ENCODE measurements at regions of chr19 and their contacts with region 1.

Region 1: DNA sequence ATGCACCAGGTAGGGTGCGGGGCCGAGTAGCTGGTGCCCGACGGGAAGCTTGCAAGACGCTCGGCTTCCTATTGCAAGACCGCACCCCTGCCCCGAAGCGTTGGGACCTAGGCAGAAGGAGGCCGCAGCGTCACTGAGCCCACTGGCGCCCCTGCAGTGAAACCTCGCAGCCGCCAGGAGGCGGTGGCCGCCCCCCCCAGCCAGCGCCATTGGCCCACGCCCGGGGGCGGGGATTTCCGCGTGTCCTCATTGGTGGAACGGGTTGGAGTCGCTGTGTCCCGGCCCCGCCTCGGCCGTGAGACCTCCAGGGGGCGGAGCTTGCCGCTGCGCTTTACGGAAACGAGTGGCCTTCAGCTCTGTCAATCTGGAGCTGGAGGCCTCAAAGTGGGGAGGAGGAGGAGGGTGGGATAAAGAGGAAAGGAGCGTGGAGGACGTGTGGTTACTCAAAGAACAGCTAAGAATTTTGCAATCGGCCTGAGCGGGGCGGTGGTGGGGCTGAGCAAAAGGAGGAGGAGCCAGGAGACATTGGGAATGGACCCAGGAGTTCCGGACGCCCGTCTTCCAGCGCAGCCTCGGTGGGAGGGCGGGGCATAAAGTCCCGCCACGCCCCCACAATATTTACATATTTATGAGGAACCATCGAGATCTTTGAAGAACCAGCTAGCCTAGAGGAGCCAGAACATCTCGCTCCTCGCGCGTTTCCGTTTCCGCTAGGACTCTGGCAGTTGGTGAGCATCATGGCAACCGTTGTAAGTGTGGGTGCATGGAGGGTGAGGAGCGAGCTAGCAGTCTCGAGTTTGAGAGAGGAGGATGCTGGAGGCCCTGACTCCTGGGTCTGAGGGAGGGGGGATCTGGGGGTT is at the starts of genes GYS1 and RUVBL2:
- DNase-seq: peak; percentile 99
- ATAC-seq: peak; percentile 91
- H3K4me3 ChIP-seq: peak within 1 kb of the TSS; percentile 75 to 77
- H3K27ac ChIP-seq: peak within 1 kb of the TSS; percentile 75
- H3K4me1 ChIP-seq: peaks cover 15 to 34% of the 10 kb centered on the region in 2 experiments
- H3K27me3 ChIP-seq: no peaks in the 10 kb centered on the region
- CTCF ChIP-seq: peak; percentile 73 to 85 (median 85)
- POLR2A ChIP-seq: peak; percentile 84
- RAD21 ChIP-seq: no peak; the same call in none of the 2 replicates
- total RNA-seq, gene GYS1: 50.7 TPM
- total RNA-seq, gene RUVBL2: 270 TPM

Region 2: DNA sequence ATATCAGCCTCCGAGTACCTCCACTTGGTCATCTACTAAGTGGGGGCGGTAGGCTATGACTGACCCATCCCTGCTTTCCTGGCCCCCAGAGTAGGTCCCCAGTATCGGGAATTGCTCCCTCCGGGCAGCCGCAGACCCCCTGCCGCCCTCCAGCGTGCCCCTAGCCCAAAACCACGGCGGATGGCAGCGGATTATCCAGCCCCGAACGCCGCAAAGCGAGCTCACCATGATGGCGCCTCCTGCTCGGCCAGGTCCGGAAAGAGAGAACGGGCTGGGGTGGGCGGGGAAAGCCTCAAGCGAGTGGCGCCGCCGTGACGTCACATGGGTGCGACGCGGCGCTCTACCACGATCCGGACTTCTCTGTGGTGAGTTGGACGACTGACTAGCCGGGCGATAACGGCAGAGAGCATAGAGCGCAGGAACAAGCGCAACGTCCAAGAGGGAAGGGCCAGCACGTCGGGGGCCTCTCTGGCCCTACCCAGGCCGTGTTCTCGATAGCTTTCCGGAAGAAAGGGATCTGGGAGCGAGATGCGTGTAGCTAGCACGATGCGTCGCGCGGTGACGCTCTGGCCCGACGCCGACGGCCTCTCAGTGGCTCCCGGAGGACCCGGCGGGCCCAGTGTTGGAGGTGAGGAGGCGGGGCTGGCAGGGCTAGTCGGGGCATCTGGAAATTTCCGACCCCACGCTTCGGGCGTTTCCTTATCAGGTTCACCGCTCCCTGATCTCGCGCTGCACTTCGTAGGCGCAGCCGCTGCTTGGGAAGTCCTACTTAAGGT is 374.3 kb before region 1 on chr19 and contains the starts of genes RPL18 and SPHK2:
- CTCF ChIA-PET with region 1: no interaction called
- POLR2A ChIA-PET with region 1: interaction called, 11 read pairs
- RAD21 ChIA-PET with region 1: no interaction called
- intact Hi-C with region 1: no loop called
- DNase-seq: peak; percentile 99
- ATAC-seq: peak; percentile 78
- H3K4me3 ChIP-seq: peak within 1 kb of the TSS; percentile 56 to 93
- H3K27ac ChIP-seq: peak within 1 kb of the TSS; percentile 86
- H3K4me1 ChIP-seq: peaks cover 38 to 56% of the 10 kb centered on the region in 2 experiments
- H3K27me3 ChIP-seq: no peaks in the 10 kb centered on the region
- CTCF ChIP-seq: no peak
- POLR2A ChIP-seq: peak; percentile 86
- RAD21 ChIP-seq: no peak
- total RNA-seq, gene RPL18: 2,006 TPM
- total RNA-seq, gene SPHK2: 19.9 TPM

Region 3: DNA sequence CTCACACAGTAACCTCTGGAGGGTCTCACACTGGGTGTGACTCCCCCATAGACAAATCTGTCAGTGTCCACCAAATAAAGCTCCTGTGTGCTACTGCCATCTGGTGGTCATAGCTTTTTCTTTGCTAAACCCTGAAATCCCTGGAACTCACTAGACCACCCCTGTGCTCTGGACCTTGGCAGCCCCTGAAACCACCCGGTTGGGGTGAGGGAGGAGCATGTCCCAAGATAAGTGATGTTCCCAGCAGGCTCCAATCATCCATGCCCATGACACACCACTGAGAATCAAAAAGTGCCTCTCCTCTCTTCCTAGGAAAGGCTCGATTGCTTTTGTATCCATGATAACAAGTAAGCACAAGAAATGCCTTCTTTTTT is 150.6 kb before region 1 on chr19:
- CTCF ChIA-PET with region 1: interaction called, 11 read pairs
- POLR2A ChIA-PET with region 1: no interaction called
- RAD21 ChIA-PET with region 1: no interaction called
- intact Hi-C with region 1: no loop called
- DNase-seq: peak; percentile 46
- ATAC-seq: peak; percentile 79
- H3K4me3 ChIP-seq: no peak overlapping the region
- H3K27ac ChIP-seq: no peak overlapping the region
- H3K4me1 ChIP-seq: peaks cover 0 to 5% of the 10 kb centered on the region in 2 experiments; a peak in 1 of 4 replicates
- H3K27me3 ChIP-seq: no peaks in the 10 kb centered on the region
- CTCF ChIP-seq: peak; percentile 60 to 90 (median 75)
- POLR2A ChIP-seq: no peak
- RAD21 ChIP-seq: peak; percentile 73

Region 4: GRCh38 chr19:48975947-48976847 is 17.2 kb before region 1 on chr19:
- CTCF ChIA-PET with region 1: interaction called, 28 read pairs
- POLR2A ChIA-PET with region 1: interaction called, 6 read pairs
- RAD21 ChIA-PET with region 1: no interaction called
- intact Hi-C with region 1: no loop called
- DNase-seq: no peak
- ATAC-seq: peak; percentile 80
- H3K4me3 ChIP-seq: no peak overlapping the region
- H3K27ac ChIP-seq: no peak overlapping the region
- H3K4me1 ChIP-seq: peaks cover 5 to 14% of the 10 kb centered on the region in 2 experiments; a peak in 3 of 4 replicates
- H3K27me3 ChIP-seq: no peaks in the 10 kb centered on the region
- CTCF ChIP-seq: 0 out of 6 replicates have a peak, but pooled peaks of 1 of the 3 experiments have one; percentile 10
- POLR2A ChIP-seq: no peak
- RAD21 ChIP-seq: no peak

Region 5: GRCh38 chr19:49017666-49018351 is 24.4 kb after region 1 on chr19:
- CTCF ChIA-PET with region 1: interaction called, 44 read pairs
- POLR2A ChIA-PET with region 1: interaction called, 11 read pairs
- RAD21 ChIA-PET with region 1: interaction called in 1 of 2 experiments, 4 read pairs
- intact Hi-C with region 1: no loop called
- DNase-seq: peak; percentile 60
- ATAC-seq: peak; percentile 73
- H3K4me3 ChIP-seq: peak overlapping the region; percentile 53 to 60
- H3K27ac ChIP-seq: peak overlapping the region; percentile 95
- H3K4me1 ChIP-seq: peaks cover 31 to 55% of the 10 kb centered on the region in 2 experiments
- H3K27me3 ChIP-seq: no peaks in the 10 kb centered on the region
- CTCF ChIP-seq: peak in 2 of 3 experiments; percentile 47 to 53; a peak in 4 of 6 replicates
- POLR2A ChIP-seq: peak; percentile 36
- RAD21 ChIP-seq: no peak

Region 6: DNA sequence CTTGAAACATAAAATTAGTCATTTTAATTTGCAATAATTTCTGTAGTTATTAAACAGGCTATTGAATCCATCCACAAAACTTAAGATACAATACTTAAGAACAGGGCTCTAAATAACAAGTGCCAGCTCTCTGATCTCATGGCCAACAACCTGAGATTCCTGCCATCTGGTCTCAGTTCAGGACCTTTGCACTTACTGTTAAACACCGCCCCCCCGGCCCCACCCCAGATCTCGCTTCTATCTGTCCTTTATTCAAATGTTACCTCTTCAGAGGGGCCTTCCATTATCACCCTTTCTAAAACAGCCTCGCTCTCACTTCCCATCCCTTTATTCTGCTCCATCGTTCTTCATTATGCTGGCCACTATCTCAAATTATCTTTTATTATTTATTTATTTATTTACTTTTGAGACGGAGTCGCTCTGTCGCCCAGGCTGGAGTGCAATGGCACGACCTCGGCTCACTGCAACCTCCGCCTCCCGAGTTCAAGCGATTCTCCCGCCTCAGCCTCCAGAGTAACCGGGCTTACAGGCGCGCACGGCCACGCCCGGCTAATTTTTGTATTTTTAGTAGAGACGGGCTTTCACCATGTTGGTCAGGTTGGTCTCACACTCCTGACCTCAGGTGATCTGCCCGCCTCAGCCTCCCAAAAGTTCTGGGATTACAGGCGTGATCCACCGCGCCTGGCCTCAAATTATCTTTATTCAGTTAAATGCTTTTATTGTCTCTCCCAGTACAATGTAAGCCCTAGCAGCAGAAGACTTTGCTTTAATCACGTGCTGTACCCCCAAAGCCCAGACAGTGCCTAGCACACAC is 91.0 kb after region 1 on chr19:
- CTCF ChIA-PET with region 1: no interaction called
- POLR2A ChIA-PET with region 1: no interaction called
- RAD21 ChIA-PET with region 1: no interaction called
- intact Hi-C with region 1: no loop called
- DNase-seq: no peak
- ATAC-seq: 0 out of 2 replicates have a peak, but pooled peaks have one; percentile 0
- H3K4me3 ChIP-seq: peak overlapping the region; percentile 25 to 86
- H3K27ac ChIP-seq: peak overlapping the region; percentile 94
- H3K4me1 ChIP-seq: peaks cover 6 to 25% of the 10 kb centered on the region in 2 experiments
- H3K27me3 ChIP-seq: no peaks in the 10 kb centered on the region
- CTCF ChIP-seq: no peak
- POLR2A ChIP-seq: no peak
- RAD21 ChIP-seq: no peak

Region 7: GRCh38 chr19:49224856-49225255 is 231.5 kb after region 1 on chr19:
- CTCF ChIA-PET with region 1: interaction called, 10 read pairs
- POLR2A ChIA-PET with region 1: no interaction called
- RAD21 ChIA-PET with region 1: no interaction called
- intact Hi-C with region 1: loop called (anchors 5 kb)
- DNase-seq: peak; percentile 61
- ATAC-seq: peak; percentile 87
- H3K4me3 ChIP-seq: no peak overlapping the region
- H3K27ac ChIP-seq: no peak overlapping the region
- H3K4me1 ChIP-seq: peaks cover 7 to 20% of the 10 kb centered on the region in 2 experiments; a peak in 3 of 4 replicates
- H3K27me3 ChIP-seq: no peaks in the 10 kb centered on the region
- CTCF ChIP-seq: peak; percentile 61 to 82 (median 67)
- POLR2A ChIP-seq: no peak
- RAD21 ChIP-seq: peak; percentile 93